ENCODE measurements at regions of chr2 and their contacts with region 1.

Region 1: GRCh38 chr2:149597668-149598326 is 10.2 kb upstream of the MMADHC start:
- DNase-seq: no peak
- ATAC-seq: peak; percentile 96

Region 2: GRCh38 chr2:149686136-149687051 is 88.6 kb after region 1 on chr2:
- intact Hi-C with region 1: no loop called
- DNase-seq: no peak
- ATAC-seq: peak; percentile 31

Region 3: DNA sequence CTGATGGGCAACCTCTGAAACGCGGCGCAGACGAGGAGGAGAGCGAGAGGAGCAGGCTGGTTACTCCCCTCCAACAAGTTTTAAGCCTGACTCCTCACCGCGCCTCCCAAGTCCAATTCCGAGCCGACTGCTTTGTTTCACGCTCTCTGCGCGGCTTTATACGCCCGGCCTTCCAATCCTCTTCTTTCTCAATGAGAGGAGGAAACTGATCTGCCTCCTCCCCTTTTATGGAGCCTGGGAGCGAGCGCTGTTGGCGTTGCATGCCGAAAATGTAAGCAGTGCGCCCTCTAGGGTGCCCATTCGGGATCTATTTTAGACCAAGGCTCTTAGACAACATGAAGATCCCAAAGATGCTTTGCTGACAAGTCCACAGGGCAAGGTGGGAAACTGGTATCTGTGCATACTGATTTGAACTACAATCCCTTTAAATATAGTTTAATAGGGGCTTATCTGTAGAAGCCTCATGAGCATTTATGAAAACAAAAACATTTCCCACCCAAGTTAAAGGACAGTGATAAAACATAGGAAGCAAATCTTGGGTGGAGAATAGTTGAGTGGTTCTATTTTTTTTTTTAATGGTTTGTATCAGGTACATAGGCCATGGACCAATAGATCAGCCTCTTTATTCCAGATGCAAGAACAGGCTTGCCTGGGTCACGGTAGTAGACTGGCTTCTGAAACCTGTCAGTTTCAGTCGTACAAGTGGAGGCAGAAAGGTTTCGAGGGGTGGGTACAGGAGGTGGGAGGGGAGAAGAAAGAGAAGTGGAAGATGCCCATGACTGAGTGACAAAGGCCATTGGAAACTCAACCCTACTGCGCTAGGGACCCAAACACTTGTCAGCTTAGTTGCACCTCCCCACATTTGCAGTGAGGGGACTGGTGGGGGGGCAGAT is 890.0 kb after region 1 on chr2 and contains the start of gene RND3:
- intact Hi-C with region 1: loop called (anchors 5 kb)
- DNase-seq: peak; percentile 96
- ATAC-seq: peak; percentile 76
- total RNA-seq, gene RND3: 20.4 TPM

Region 4: DNA sequence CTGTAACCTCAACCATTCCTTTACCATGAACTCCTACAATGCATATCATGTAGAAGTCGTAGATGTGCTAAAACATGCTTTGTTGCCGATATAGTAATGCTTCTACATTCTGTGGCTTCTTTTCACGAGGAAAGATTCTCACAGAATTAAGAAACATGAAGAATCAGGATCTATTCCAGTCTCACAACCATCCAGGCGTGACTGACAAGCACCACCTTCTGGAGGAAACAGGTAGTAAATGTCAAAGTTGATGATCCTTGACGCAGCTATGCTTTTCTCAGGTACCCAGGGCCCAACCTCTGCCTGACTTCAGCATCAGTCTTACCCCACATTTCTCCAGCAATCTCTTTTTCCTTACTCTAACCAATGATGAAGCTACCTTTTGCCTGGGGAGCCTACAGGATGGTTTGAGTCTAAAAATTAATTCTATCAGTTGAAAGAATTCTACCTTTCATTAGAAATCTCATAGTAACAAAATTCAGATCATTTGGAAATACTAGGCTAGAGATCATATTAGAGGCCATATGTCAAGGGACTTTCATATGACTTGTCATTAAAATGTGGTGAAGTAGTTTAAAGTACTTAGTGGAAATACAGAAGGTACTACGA is 1013.0 kb after region 1 on chr2:
- intact Hi-C with region 1: loop called (anchors 5 kb)
- DNase-seq: no peak
- ATAC-seq: peak; percentile 56

Region 5: DNA sequence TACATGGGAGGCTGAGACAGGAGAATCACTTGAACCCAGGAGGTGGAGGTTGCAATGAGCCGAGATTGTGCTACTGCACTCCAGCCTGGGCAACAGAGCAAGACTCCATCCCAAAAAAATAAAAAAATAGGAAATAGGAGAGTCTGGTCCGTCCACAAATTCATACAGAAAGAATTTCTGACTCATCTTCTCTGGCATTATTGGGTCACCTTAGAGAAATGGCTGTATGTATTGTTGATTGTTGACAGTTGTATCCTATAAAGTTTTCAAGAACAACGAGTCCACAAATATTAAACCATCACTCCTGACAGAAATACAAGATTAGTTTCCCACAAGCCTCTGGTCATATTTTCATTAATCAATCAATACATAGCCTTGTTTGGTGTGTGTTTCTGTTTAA is 1643.4 kb after region 1 on chr2:
- intact Hi-C with region 1: loop called (anchors 5 kb)
- DNase-seq: no peak
- ATAC-seq: no peak

Measured in Right ventricle myocardium superior (tissue), 1 donor.